PC-9 (cell line): ENCODE measurements at regions of chr5 and their contacts with region 1.

Region 1: DNA sequence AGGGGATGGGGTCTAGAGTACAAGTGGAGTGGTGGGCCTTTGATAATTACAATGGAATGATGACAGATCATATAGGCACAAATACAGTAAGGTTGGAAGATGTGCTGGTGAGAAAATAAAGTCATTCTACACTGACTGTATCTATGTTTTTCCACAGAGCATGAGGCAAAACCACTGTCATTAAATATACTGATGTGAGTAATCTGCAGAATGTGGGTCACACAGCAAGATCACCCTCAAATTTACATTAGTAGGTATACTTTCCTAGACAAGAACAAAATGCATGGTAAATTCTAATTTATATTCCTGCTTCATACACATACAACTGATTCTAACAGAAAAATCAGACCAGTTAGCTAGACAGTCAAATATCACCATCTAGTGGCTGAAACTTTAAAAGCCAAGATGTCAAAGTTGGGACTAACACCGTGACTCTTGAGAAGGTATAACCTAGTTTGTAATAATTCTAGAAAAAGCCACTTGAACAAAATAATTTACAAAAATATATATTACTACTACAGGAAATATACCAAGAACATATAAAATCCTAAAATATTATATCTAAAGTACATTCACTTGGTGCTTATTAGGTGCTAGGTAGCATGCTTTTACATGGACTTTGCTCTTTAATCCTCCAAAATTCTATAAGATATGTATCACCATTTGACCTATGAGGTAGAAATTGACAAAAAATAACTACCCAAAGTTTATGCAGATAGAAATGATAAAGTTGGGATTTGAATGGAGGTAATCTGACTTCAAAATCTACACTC is 19.5 kb downstream of the TTC33 start:
- DNase-seq: peak in 1 of 2 experiments; percentile 56
- H3K4me3 ChIP-seq: no peak overlapping the region
- H3K27ac ChIP-seq: no peak overlapping the region
- H3K4me1 ChIP-seq: 0 out of 2 replicates have a peak, but pooled peaks cover 8% of the 10 kb centered on the region
- H3K27me3 ChIP-seq: no peaks in the 10 kb centered on the region
- CTCF ChIP-seq: peak; percentile 91

Region 2: DNA sequence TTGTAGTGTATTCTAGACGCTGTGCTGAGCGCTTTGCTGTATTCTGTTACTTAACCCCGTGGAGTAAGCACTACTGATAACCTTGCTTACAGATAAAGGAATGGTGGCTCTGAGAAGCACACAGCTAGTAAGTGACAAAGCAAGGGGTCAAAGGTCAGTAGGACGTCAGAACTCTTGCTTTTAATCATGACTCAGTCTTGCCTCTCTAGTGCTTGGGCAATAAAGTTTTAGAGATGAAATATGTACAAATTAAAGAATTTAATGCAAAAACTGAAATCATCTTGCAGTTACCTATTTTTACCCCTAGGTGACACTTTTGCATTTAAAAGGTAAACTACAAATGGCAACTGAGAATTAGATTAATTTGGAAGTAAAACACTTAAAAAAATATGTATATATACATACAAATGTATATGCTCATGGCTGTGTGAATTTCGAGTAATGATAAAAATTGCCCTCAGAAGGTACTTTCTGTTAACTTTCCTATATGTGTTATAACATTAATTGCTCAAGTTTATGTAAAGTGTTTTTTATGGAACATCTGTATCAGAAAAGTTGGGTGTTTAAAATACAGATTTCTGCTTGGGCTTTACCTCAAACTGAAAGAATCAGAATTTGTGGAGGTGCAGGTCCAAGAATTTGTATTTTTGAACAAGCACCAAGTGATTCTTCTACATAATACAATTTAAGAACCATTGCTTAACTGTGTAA is 1136.4 kb before region 1 on chr5:
- CTCF ChIA-PET with region 1: no interaction called
- POLR2A ChIA-PET with region 1: no interaction called
- intact Hi-C with region 1: loop called (anchors 5 kb)
- DNase-seq: peak in 1 of 2 experiments; percentile 63
- H3K4me3 ChIP-seq: no peak overlapping the region
- H3K27ac ChIP-seq: no peak overlapping the region
- H3K4me1 ChIP-seq: peaks cover 12% of the 10 kb centered on the region
- H3K27me3 ChIP-seq: no peaks in the 10 kb centered on the region
- CTCF ChIP-seq: peak; percentile 85

Region 3: GRCh38 chr5:39714036-39714698 is 1022.1 kb before region 1 on chr5:
- CTCF ChIA-PET with region 1: no interaction called
- POLR2A ChIA-PET with region 1: interaction called, 6 read pairs
- intact Hi-C with region 1: loop called (anchors 1 kb)
- DNase-seq: peak; percentile 63 to 74
- H3K4me3 ChIP-seq: no peak overlapping the region
- H3K27ac ChIP-seq: peak overlapping the region; percentile 60
- H3K4me1 ChIP-seq: peaks cover 8% of the 10 kb centered on the region; the same call in 1 of the 2 replicates
- H3K27me3 ChIP-seq: no peaks in the 10 kb centered on the region
- CTCF ChIP-seq: peak; percentile 87

Region 4: DNA sequence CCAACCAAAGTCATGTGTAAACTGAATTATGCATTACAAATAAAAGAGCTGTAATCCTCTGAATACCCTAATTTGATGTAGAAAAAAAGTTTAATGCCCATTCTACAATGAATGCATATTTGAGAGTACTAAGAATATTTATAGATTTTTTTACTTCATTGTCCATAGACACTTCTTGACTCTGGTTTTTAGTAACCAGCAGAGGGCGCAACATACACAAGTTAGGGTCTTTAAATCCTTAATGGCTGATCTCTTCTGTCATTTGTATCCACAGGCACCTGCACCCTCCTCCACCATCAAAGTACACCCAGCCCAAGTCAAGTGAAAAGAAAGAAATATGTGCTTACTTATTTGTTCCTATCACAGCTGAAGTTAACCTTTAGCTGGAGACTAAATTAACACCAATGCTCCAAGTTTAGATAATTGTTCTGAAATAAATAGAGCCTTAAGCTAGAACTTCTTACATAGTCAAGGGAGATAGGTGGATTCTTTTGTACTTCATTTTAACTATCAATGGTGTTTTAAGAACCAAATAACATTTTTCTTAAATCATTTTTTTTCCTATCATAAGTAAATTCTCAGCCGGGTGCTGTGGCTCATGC is 787.3 kb before region 1 on chr5:
- CTCF ChIA-PET with region 1: no interaction called
- POLR2A ChIA-PET with region 1: no interaction called
- intact Hi-C with region 1: loop called (anchors 1 kb)
- DNase-seq: peak; percentile 56 to 66
- H3K4me3 ChIP-seq: no peak overlapping the region
- H3K27ac ChIP-seq: no peak overlapping the region
- H3K4me1 ChIP-seq: no peaks in the 10 kb centered on the region
- H3K27me3 ChIP-seq: no peaks in the 10 kb centered on the region
- CTCF ChIP-seq: peak; percentile 96

Region 5: DNA sequence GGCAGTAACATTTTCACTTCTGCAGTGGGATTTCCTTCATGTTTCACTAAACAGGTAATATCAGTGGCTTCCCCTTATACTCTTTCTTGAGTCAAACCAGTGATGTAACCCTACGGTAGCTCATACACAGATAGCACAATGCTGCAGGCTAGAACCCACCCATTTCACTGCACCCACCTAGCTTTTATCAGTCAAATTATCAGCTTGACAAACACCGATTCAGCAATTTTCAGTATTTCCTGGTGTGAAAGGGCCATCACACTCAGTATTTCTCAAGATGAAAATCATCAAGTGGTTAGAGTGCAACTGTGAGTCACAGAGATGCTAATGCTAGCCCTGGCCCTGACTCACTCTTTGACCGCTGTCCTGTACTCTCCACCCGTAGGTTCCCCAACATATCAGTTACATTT is 298.8 kb before region 1 on chr5:
- CTCF ChIA-PET with region 1: no interaction called
- POLR2A ChIA-PET with region 1: no interaction called
- intact Hi-C with region 1: loop called (anchors 5 kb)
- DNase-seq: peak; percentile 77 to 99
- H3K4me3 ChIP-seq: no peak overlapping the region
- H3K27ac ChIP-seq: peak overlapping the region; percentile 74
- H3K4me1 ChIP-seq: peaks cover 22% of the 10 kb centered on the region
- H3K27me3 ChIP-seq: no peaks in the 10 kb centered on the region
- CTCF ChIP-seq: no peak

Region 6: DNA sequence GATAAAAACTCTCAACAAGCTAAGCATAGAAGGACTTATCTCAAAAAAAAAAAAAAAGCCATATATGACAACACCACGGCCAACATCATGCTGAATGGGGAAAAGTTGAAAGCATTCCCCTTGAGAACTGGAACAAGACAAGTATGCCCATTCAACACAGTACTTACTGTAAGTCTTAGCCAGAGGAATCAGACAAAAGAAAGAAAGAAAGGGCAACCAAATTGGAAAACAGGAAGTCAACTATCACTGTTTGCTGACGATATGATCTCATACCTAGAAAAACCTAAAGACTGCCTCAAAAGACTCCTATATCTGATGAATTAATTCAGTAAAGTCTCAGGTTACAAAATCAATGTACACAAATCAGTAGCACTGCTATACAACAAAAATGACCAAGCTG is 81.2 kb before region 1 on chr5:
- CTCF ChIA-PET with region 1: no interaction called
- POLR2A ChIA-PET with region 1: interaction called, 12 read pairs
- intact Hi-C with region 1: no loop called
- DNase-seq: no peak
- H3K4me3 ChIP-seq: no peak overlapping the region
- H3K27ac ChIP-seq: no peak overlapping the region
- H3K4me1 ChIP-seq: no peaks in the 10 kb centered on the region
- H3K27me3 ChIP-seq: no peaks in the 10 kb centered on the region
- CTCF ChIP-seq: no peak

Region 7: GRCh38 chr5:40770764-40771163 is 34.5 kb after region 1 on chr5:
- CTCF ChIA-PET with region 1: no interaction called
- POLR2A ChIA-PET with region 1: no interaction called
- intact Hi-C with region 1: no loop called
- DNase-seq: no peak
- H3K4me3 ChIP-seq: no peak overlapping the region
- H3K27ac ChIP-seq: no peak overlapping the region
- H3K4me1 ChIP-seq: 0 out of 2 replicates have a peak, but pooled peaks cover under 1% of the 10 kb centered on the region
- H3K27me3 ChIP-seq: no peaks in the 10 kb centered on the region
- CTCF ChIP-seq: no peak

Region 8: DNA sequence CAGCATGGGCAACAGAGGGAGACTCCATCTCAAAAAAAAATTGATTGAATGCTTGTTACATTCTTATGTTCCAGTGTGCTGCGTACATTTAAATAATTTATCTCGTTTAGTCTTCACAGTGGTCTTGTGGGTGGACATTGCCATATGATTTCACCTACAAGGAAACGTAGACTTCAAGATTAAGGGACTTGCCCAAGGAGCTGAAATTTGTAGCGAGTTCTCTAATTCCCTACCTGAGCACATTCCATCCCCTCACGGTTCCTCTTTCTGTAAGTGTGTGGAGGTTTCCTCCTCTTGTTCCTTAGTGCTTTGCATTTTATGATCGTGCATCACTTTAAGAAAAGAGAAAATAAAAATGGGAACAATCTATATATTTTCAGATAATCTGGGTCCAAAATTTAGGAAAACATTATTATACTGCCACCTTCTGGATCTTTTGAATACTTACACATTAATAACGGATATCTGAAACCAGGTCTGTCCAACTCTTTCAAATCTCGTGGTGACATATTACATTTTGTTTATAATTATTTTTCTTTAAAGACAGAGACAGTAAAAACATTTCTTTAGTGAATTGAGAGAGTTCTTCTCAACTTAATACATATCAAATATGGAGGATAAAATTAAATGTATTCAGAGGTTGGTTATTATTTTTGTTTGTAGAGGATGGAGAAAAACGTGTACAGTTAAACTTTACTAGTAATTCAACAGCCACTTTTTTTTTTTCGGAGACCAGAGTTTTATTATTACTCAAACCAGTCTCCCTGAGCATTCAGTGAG is 143.1 kb after region 1 on chr5:
- CTCF ChIA-PET with region 1: no interaction called
- POLR2A ChIA-PET with region 1: no interaction called
- intact Hi-C with region 1: loop called (anchors 5 kb)
- DNase-seq: peak; percentile 6 to 47
- H3K4me3 ChIP-seq: no peak overlapping the region
- H3K27ac ChIP-seq: no peak overlapping the region
- H3K4me1 ChIP-seq: no peaks in the 10 kb centered on the region
- H3K27me3 ChIP-seq: no peaks in the 10 kb centered on the region
- CTCF ChIP-seq: peak; percentile 90